ENCODE measurements at regions of chr19 and their contacts with region 1.

Region 1: GRCh38 chr19:45485305-45486077 is 11.4 kb downstream of the RTN2 start:
- DNase-seq: peak; percentile 99
- H3K4me3 Mint-ChIP-seq: peak overlapping the region; percentile 90
- H3K27ac Mint-ChIP-seq: peak overlapping the region; percentile 80
- H3K4me1 Mint-ChIP-seq: peaks cover 16% of the 10 kb centered on the region
- H3K27me3 Mint-ChIP-seq: peaks cover 4% of the 10 kb centered on the region

Region 2: GRCh38 chr19:45413497-45413896 is 72.0 kb before region 1 on chr19:
- CTCF ChIA-PET with region 1: interaction called, 13 read pairs
- POLR2A ChIA-PET with region 1: no interaction called
- DNase-seq: no peak
- H3K4me3 Mint-ChIP-seq: no peak overlapping the region
- H3K27ac Mint-ChIP-seq: no peak overlapping the region
- H3K4me1 Mint-ChIP-seq: peaks cover 6% of the 10 kb centered on the region
- H3K27me3 Mint-ChIP-seq: no peaks in the 10 kb centered on the region

Region 3: GRCh38 chr19:45439569-45440254 is 45.8 kb before region 1 on chr19:
- CTCF ChIA-PET with region 1: interaction called, 310 read pairs
- POLR2A ChIA-PET with region 1: no interaction called
- DNase-seq: peak; percentile 80
- H3K4me3 Mint-ChIP-seq: peak overlapping the region; percentile 71
- H3K27ac Mint-ChIP-seq: peak overlapping the region; percentile 78
- H3K4me1 Mint-ChIP-seq: peaks cover 34% of the 10 kb centered on the region
- H3K27me3 Mint-ChIP-seq: no peaks in the 10 kb centered on the region

Region 4: GRCh38 chr19:45469132-45469944 is 16.2 kb before region 1 on chr19:
- CTCF ChIA-PET with region 1: interaction called, 48 read pairs
- POLR2A ChIA-PET with region 1: no interaction called
- DNase-seq: peak; percentile 94
- H3K4me3 Mint-ChIP-seq: peak overlapping the region; percentile 89
- H3K27ac Mint-ChIP-seq: peak overlapping the region; percentile 95
- H3K4me1 Mint-ChIP-seq: peaks cover 35% of the 10 kb centered on the region
- H3K27me3 Mint-ChIP-seq: peaks cover 36% of the 10 kb centered on the region

Region 5: DNA sequence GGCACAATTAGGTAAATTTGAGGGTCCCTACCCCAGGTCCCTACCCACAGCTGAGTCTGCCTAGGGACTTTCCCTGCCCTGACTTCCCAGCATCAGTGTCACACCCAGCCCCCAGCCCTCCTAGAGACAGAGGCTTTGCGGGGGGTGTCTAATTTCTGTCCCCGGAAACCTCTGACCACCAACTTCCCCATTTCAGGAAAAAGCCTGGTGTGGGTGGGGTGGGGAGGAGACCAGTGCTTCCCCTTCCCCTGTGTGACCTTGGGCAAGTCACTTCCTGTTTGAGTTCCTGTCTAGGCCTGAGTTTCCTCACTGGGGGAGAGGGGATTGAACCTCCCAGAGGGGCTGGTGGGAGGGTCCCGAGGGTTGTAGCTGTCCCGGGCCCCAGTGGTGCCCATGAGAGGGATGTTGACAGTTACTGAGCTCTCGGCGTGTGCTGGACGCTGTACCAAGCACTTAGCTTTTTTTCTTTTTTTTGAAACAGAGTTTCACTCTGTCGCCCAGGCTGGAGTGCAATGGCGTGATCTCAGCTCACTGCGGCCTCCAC is 29.7 kb after region 1 on chr19:
- CTCF ChIA-PET with region 1: interaction called, 10 read pairs
- POLR2A ChIA-PET with region 1: no interaction called
- DNase-seq: no peak
- H3K4me3 Mint-ChIP-seq: peak overlapping the region; percentile 23
- H3K27ac Mint-ChIP-seq: peak overlapping the region; percentile 79
- H3K4me1 Mint-ChIP-seq: peaks cover 68% of the 10 kb centered on the region
- H3K27me3 Mint-ChIP-seq: no peaks in the 10 kb centered on the region